K562 (cell line): ENCODE measurements at regions of chr1 and their contacts with region 1.

Region 1: DNA sequence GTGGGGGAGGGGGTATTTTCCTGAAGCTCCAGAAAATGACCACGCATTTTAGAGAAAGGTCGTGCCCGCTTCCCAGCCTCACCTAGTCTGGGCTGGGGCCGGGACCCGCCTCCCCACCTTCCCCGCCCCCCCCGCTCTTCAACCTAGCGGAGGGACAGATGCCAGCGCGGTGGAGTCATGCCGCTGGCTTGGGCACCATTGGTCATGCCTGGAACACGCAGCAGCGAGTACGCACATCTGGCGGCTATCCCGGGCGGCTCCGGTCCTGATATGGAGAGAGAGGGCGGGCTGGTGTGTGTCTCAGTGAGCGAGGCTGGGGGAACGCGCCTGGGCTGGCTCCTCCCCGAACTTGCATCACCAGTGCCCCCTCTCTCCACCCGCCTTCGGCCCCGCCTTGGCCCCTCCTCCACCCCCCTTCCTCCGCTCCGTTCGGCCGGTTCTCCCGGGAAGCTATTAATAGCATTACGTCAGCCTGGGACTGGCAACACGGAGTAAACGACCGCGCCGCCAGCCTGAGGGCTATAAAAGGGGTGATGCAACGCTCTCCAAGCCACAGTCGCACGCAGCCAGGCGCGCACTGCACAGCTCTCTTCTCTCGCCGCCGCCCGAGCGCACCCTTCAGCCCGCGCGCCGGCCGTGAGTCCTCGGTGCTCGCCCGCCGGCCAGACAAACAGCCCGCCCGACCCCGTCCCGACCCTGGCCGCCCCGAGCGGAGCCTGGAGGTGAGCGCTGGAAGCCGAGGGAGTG is at the start of gene ATF3:
- DNase-seq: peak; percentile 98 to 99 (median 98)
- ATAC-seq: peak; percentile 90
- H3K4me3 ChIP-seq: peak within 1 kb of the TSS; percentile 78
- H3K27ac ChIP-seq: peak within 1 kb of the TSS; percentile 87
- H3K4me1 ChIP-seq: peaks cover 33 to 35% of the 10 kb centered on the region in 2 experiments
- H3K27me3 ChIP-seq: peaks cover 37 to 38% of the 10 kb centered on the region in 2 experiments
- CTCF ChIP-seq: peak in 1 of 3 experiments; percentile 9; a peak in 1 of 6 replicates
- EP300 ChIP-seq: peak; percentile 81
- POLR2A ChIP-seq: peak; percentile 99
- RAD21 ChIP-seq: no peak
- polyA plus RNA-seq, gene ATF3: 6.1 to 6.8 TPM

Region 2: DNA sequence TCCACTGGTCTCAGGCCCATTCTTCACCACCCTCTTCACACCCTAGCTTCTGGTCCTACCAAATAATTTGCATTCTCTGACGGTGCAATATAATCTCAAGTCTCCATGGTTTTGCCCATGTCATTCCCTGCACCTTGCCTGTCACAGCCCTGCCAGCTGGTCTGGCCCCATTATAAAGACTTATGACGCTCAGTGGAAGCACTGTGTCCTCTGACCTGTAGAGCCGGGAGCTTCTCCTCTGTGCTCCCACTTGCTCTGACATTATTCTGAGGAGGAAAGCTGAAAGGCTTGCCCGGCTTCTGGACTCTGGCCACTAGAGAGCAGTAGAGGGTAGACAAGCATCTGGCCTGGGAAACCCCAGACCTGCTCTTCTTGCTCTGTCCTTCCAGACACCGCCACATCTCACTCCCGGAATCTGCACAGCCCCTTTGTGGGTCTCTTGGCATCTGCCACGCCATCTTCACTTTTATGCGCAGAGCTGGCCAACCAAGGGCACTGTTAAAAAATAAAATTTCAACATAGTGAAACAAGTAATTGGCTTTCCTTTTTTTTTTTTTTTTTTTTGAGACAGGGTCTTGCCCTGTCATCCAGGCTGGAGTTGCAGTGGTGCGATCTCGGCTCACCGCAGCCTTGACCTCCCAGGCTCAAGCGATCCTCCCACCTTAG is 131.2 kb before region 1 on chr1:
- CTCF ChIA-PET with region 1: no interaction called
- POLR2A ChIA-PET with region 1: interaction called, 39 read pairs
- in situ Hi-C with region 1: no loop called
- intact Hi-C with region 1: no loop called
- DNase-seq: peak; percentile 88 to 93 (median 91)
- ATAC-seq: peak; percentile 97
- H3K4me3 ChIP-seq: no peak overlapping the region
- H3K27ac ChIP-seq: no peak overlapping the region
- H3K4me1 ChIP-seq: peaks cover 3 to 12% of the 10 kb centered on the region in 2 experiments; a peak in 4 of 5 replicates
- H3K27me3 ChIP-seq: peaks cover 11 to 42% of the 10 kb centered on the region in 2 experiments; a peak in 4 of 5 replicates
- CTCF ChIP-seq: peak; percentile 96 to 98 (median 97)
- EP300 ChIP-seq: no peak; the same call in 1 of the 2 replicates
- POLR2A ChIP-seq: no peak
- RAD21 ChIP-seq: peak; percentile 97 to 98

Region 3: DNA sequence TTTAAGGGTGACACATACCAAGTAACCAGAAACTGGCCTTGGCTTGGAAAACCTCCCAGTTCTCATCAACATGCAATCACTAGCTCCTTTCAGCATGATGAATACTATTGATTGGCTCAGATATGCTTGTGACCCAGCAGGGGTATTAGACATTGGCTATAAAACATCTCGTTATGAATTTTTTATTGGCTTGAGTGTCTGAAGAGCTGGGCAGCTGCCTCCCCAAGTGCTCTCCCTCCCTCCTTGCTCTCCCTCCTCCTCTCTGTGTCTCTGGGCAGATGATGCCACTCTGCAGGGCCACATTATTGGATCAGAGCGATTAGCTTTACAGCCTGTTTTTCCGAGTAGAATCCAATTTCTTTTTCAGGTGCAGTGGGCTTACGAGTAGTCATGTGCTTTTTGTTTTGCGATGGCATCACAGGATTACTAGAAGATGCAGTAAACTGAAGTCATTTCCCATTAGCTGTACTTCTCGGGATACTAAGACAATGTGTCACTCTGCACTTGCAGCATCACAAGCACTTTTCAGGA is 79.1 kb before region 1 on chr1:
- CTCF ChIA-PET with region 1: no interaction called
- POLR2A ChIA-PET with region 1: interaction called, 10 read pairs
- in situ Hi-C with region 1: no loop called
- intact Hi-C with region 1: no loop called
- DNase-seq: no peak
- ATAC-seq: no peak
- H3K4me3 ChIP-seq: no peak overlapping the region
- H3K27ac ChIP-seq: no peak overlapping the region
- H3K4me1 ChIP-seq: no peaks in the 10 kb centered on the region
- H3K27me3 ChIP-seq: peaks cover 23 to 38% of the 10 kb centered on the region in 2 experiments; a peak in 4 of 5 replicates
- CTCF ChIP-seq: no peak
- EP300 ChIP-seq: no peak
- POLR2A ChIP-seq: no peak
- RAD21 ChIP-seq: no peak

Region 4: DNA sequence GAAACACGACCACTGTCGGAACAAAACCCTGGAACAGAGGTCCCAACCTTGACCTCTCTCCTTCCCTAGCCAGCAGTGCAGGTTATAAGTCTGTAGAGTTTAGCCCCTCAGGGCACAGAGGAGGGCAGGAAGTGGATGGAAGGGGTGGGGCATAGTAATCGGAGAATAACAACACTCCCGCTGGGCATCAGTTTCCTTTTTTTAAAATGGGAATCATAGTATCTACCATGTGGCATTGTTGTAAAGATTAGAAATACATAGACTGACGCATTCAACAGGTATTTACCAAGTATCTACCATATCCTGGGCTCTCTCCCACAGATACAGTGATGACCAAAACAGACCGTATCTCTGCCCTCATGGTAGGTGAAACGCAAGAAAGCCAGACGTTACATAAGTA is 24.7 kb before region 1 on chr1:
- CTCF ChIA-PET with region 1: no interaction called
- POLR2A ChIA-PET with region 1: interaction called, 15 read pairs
- in situ Hi-C with region 1: no loop called
- intact Hi-C with region 1: no loop called
- DNase-seq: no peak
- ATAC-seq: no peak
- H3K4me3 ChIP-seq: no peak overlapping the region
- H3K27ac ChIP-seq: no peak overlapping the region
- H3K4me1 ChIP-seq: no peaks in the 10 kb centered on the region; a peak in 3 of 5 replicates
- H3K27me3 ChIP-seq: peaks cover 53 to 65% of the 10 kb centered on the region in 2 experiments
- CTCF ChIP-seq: no peak
- EP300 ChIP-seq: no peak
- POLR2A ChIP-seq: no peak
- RAD21 ChIP-seq: no peak

Region 5: GRCh38 chr1:212621951-212622305 is 13.5 kb after region 1 on chr1:
- CTCF ChIA-PET with region 1: no interaction called
- POLR2A ChIA-PET with region 1: interaction called, 90 read pairs
- in situ Hi-C with region 1: no loop called
- intact Hi-C with region 1: no loop called
- DNase-seq: no peak
- ATAC-seq: peak; percentile 50
- H3K4me3 ChIP-seq: no peak overlapping the region
- H3K27ac ChIP-seq: no peak overlapping the region
- H3K4me1 ChIP-seq: peaks cover 0 to 4% of the 10 kb centered on the region in 2 experiments; a peak in 1 of 5 replicates
- H3K27me3 ChIP-seq: peaks cover 30 to 37% of the 10 kb centered on the region in 2 experiments
- CTCF ChIP-seq: no peak
- EP300 ChIP-seq: no peak
- POLR2A ChIP-seq: no peak
- RAD21 ChIP-seq: no peak

Region 6: GRCh38 chr1:213051127-213051880 is 442.9 kb after region 1 on chr1 and contains the start of gene RPS6KC1:
- CTCF ChIA-PET with region 1: no interaction called
- POLR2A ChIA-PET with region 1: no interaction called
- in situ Hi-C with region 1: no loop called
- intact Hi-C with region 1: loop called (anchors 5 kb)
- DNase-seq: peak; percentile 92 to 97 (median 93)
- ATAC-seq: peak; percentile 89
- H3K4me3 ChIP-seq: peak within 1 kb of the TSS; percentile 76
- H3K27ac ChIP-seq: peak within 1 kb of the TSS; percentile 92
- H3K4me1 ChIP-seq: peaks cover 33 to 71% of the 10 kb centered on the region in 2 experiments
- H3K27me3 ChIP-seq: no peaks in the 10 kb centered on the region
- CTCF ChIP-seq: no peak; a peak in 1 of 6 replicates
- EP300 ChIP-seq: peak; percentile 74
- POLR2A ChIP-seq: peak; percentile 84
- RAD21 ChIP-seq: 0 out of 4 replicates have a peak, but pooled peaks of 1 of the 2 experiments have one; percentile 19
- polyA plus RNA-seq, gene RPS6KC1: 4.3 to 7.6 TPM